Lower leg skin (tissue), 4 donors: ENCODE measurements at regions of chr6 and their contacts with region 1.

Region 1: DNA sequence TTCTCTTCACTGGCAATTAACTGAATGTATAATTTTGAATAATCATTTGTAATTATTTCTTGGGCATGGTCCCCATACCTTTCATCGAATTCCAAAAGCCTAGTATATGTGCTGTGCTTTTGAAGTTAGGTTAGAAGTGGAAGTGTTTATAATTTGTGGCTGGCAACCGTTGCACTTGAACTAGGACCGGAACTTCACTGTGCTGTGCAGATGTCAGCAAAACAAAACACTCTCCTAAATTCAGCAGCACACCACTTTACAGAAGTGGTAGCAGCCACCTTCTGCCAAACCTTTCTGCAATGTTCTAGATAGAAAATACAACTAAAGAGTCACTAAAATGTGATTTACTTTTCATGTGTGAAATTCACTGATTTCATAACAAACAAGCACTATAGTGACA is 111.9 kb downstream of the FAM83B start:
- DNase-seq: no peak
- H3K4me3 ChIP-seq: no peak overlapping the region
- CTCF ChIP-seq: no peak
- POLR2A ChIP-seq: no peak

Region 2: GRCh38 chr6:53888931-53889330 is 1069.5 kb before region 1 on chr6:
- intact Hi-C with region 1: loop called (anchors 5 kb)
- DNase-seq: no peak
- H3K4me3 ChIP-seq: no peak overlapping the region
- CTCF ChIP-seq: no peak
- POLR2A ChIP-seq: no peak

Region 3: DNA sequence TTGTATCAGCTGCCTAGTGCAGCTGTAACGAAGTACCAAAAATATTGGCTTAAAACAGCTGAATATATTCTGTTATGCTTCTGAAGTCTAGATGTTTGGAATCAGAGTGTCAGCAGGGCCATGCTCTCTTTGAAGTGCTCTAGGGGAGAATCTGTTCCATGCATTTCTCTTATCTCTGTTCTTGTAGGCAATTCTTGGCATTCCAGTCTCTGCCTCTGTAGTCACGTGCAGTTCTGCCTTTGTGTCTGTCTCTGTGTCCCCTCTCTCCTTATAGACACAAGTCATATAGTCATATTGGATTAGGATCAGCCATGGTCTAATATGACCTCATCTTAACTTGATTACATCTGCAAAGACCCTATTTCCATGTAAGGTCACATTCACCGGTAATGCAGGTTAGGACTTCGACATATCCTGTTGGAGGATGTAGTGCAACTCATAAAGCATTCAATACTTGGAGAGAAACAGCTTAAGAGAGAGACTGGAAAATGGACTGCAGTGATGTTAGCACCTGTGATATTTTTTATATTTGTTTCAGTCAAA is 93.3 kb before region 1 on chr6:
- intact Hi-C with region 1: no loop called
- DNase-seq: no peak
- H3K4me3 ChIP-seq: no peak overlapping the region
- CTCF ChIP-seq: no peak
- POLR2A ChIP-seq: no peak